ENCODE measurements at regions of chr5 and their contacts with region 1.

Region 1: GRCh38 chr5:57221049-57221568 is 47.2 kb downstream of the GPBP1 start:
- DNase-seq: no peak
- ATAC-seq: peak; percentile 69

Region 2: DNA sequence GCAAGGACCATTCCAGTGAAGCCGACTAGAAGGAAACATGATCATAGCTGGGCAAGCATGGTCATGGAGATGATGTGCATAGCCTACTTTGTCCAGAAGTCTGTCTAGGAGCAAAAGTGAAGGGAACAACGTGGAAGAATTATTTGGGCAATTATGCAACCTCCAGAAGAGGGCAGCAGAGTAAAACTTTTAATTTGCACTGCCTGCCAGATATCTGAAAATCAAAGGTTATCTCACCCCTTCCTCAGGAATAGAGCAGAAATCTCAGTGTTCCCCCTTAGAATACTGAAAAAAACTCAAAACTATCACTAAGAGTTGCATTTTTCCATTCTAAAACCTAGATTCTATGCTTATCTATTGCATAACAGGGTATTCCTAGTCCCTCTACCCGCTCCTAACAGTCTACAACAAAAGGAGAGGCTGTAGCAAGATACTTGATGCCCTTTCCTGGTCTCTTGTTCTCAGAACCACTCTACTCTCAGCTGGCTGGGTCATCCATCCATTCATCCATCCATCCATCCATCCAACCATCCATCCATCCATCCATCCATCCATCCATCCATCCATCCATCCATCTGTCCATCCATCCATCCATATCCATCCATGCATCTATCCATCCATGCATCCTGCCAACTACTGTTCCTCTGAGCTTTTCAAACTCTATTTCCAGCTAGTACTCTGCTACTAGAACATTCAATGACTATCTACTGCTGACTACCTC is 320.1 kb before region 1 on chr5:
- intact Hi-C with region 1: loop called (anchors 5 kb)
- DNase-seq: no peak
- ATAC-seq: peak; percentile 74

Region 3: GRCh38 chr5:57184322-57184721 is 36.8 kb before region 1 on chr5:
- intact Hi-C with region 1: no loop called
- DNase-seq: no peak
- ATAC-seq: no peak